ENCODE measurements at regions of chr6 and their contacts with region 1.

Region 1: DNA sequence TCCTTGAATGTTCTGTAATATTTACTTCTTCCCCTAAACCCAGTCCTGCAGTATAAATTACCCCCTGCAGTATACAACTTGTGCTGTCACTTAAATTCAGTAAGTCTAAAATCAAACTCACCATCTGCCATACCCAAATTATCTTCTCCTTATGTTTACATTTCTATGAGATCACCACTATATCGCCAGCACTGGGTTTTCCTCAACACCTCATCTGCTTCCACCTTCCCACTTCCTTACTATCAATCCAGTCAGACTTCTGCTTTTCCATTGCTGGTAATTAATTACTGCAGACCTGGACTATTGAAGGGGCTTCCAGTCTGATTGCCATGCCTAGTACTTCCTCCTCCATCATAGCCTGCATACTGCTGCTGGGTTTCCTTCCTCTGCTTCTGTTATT is 15.2 kb downstream of the EFHC1 start:
- DNase-seq: no peak
- H3K4me3 ChIP-seq: no peak overlapping the region
- H3K27ac ChIP-seq: no peak overlapping the region
- H3K4me1 ChIP-seq: no peaks in the 10 kb centered on the region
- CTCF ChIP-seq: no peak

Region 2: GRCh38 chr6:52474173-52474572 is 38.8 kb after region 1 on chr6:
- CTCF ChIA-PET with region 1: no interaction called
- POLR2A ChIA-PET with region 1: no interaction called
- intact Hi-C with region 1: loop called (anchors 5 kb)
- DNase-seq: no peak
- H3K4me3 ChIP-seq: no peak overlapping the region
- H3K27ac ChIP-seq: no peak overlapping the region
- H3K4me1 ChIP-seq: peaks cover 5% of the 10 kb centered on the region
- CTCF ChIP-seq: no peak